Uterus (tissue), 4 donors: ENCODE measurements at regions of chrX and their contacts with region 1.

Region 1: GRCh38 chrX:2595258-2595657 is 94.5 kb upstream of the DHRSX start:
- DNase-seq: no peak
- H3K4me3 ChIP-seq: no peak overlapping the region
- H3K27ac ChIP-seq: no peak overlapping the region
- H3K4me1 ChIP-seq: no peaks in the 10 kb centered on the region
- H3K27me3 ChIP-seq: no peaks in the 10 kb centered on the region
- CTCF ChIP-seq: no peak
- POLR2A ChIP-seq: no peak

Region 2: DNA sequence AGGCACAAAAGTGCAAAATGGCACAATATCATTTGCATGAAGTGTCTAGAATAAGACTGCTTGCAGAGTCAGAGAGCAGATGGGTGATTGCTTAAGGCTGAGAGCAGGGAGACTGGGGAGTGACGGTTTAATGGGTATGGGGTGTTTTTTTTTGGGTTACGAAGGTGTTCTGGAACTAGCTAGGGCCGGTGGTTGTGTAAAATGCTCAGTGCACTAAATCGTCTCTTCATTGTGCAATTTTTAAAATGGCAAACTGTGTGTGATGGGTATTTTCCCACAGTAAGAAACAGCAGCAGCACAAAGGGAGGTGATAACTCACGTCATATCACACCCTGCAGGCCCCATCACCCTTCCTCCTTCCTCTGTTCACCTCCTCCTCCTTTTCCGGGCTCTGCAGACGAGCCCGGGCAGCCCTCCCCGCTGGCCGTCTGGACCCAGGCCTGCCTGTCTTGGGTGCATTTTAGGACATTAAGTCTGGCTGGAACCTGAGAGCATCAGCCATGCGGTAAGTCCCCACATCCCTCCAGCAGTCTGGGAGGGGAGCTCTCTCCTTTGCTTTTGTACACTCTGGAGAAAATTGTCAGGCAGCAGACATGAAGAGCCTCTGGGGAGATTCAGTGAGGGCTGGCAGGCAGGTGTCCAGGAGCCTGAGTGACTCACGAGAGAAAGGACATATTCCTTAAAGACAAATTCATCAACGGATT is 937.7 kb before region 1 on chrX:
- intact Hi-C with region 1: loop called (anchors 10 kb)
- DNase-seq: peak in 1 of 2 donors; percentile 23
- H3K4me3 ChIP-seq: no peak overlapping the region
- H3K27ac ChIP-seq: no peak overlapping the region
- H3K4me1 ChIP-seq: no peaks in the 10 kb centered on the region
- H3K27me3 ChIP-seq: no peaks in the 10 kb centered on the region
- CTCF ChIP-seq: no peak
- POLR2A ChIP-seq: no peak